Activated naive CD4-positive, alpha-beta T cell treated with anti-CD3 and anti-CD28 coated beads, Interleukin-2, amount 10 ng/mL, durations not matched to agents 7 days and 5 days (primary cell): ENCODE measurements at regions of chr10 and their contacts with region 1.

Region 1: DNA sequence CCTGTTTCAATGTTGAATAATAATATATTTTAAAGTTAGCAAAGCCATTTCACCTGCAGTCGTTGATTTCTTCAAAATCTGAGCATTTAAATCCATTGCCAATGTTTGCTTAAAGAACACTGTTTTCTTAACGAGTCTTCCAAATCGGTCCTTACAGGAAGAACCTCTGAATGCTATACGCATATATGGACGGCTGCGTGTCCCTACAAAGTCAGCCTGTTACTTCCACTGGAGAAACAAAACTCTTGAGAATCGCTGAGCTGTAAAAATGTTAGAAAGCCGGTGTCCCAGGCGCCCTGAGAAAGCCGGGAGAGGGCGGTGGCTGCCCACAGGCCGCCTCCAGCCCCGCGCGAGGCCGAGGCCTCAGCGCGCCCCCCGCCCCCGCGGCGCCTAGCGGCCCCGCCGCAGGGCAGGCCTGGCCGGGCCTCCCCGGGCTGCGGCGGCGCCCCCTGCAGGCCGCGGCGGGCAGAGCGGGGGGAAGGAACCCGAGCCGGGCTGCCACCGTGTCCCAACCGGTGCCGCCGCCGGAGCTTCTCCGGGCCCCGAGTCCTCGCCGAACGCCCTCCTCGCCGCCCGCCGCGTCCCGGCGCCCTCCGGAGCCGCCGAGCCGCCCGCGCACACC is at the start of gene FHIP2A:
- DNase-seq: peak; percentile 82
- H3K4me3 Mint-ChIP-seq: peak within 1 kb of the TSS; percentile 85
- H3K27ac Mint-ChIP-seq: peak within 1 kb of the TSS; percentile 95
- H3K4me1 Mint-ChIP-seq: peaks cover 35% of the 10 kb centered on the region
- H3K27me3 Mint-ChIP-seq: peaks cover 24% of the 10 kb centered on the region

Region 2: GRCh38 chr10:114801411-114801813 is 20.0 kb before region 1 on chr10:
- CTCF ChIA-PET with region 1: interaction called, 24 read pairs
- DNase-seq: peak; percentile 52
- H3K4me3 Mint-ChIP-seq: peak overlapping the region; percentile 49
- H3K27ac Mint-ChIP-seq: peak overlapping the region; percentile 87
- H3K4me1 Mint-ChIP-seq: peaks cover 40% of the 10 kb centered on the region
- H3K27me3 Mint-ChIP-seq: no peaks in the 10 kb centered on the region

Region 3: GRCh38 chr10:114810926-114811325 is 10.5 kb before region 1 on chr10:
- CTCF ChIA-PET with region 1: interaction called, 28 read pairs
- DNase-seq: no peak
- H3K4me3 Mint-ChIP-seq: no peak overlapping the region
- H3K27ac Mint-ChIP-seq: peak overlapping the region; percentile 88
- H3K4me1 Mint-ChIP-seq: peaks cover 26% of the 10 kb centered on the region
- H3K27me3 Mint-ChIP-seq: peaks cover 4% of the 10 kb centered on the region

Region 4: GRCh38 chr10:115059301-115059898 is 238.0 kb after region 1 on chr10:
- CTCF ChIA-PET with region 1: no interaction called
- DNase-seq: no peak
- H3K4me3 Mint-ChIP-seq: no peak overlapping the region
- H3K27ac Mint-ChIP-seq: no peak overlapping the region
- H3K4me1 Mint-ChIP-seq: no peaks in the 10 kb centered on the region
- H3K27me3 Mint-ChIP-seq: peaks cover 3% of the 10 kb centered on the region